ENCODE measurements at regions of chr5 and their contacts with region 1.

Region 1: DNA sequence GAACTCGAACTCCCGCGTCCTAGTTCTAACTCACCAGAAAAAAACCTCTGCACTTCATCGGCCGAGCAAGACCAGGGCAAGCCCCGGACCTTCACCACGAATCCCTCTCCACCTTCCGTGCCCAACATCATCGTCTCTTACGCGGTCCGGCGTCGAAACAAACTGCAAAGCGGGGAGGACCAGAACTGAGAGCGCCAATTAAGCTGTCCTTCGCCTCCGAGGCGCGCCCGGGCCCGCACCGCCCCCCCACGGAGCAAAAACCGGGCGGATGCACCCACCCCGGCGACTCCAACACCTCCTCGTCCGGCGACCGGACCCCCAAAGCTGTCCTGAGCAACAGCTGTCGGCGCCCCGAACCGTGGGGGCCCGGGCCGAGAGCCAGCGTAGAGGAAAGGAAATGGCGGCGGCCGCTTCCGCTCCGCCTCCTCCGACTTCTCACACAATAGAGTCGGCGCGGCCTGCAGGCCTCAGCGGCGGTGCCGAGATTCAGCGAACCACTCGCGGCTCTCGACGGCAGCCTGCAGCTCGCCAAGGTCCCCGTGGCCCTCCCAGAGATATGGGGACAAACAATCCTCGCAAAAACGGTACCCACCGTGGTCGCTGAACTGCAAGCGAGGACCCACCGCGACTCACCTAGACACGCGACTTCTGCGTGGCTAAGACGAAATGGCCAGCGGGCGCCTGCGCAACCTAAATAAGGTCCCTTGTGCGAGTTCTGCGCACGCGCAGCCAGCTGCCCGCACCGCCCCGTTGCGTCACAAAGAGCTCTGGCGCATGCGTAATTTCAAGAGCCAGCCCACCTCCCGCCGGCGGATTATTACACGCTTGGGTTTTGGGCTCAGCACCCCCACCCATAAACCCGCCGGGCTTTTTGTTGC is at the start of gene HNRNPH1:
- DNase-seq: peak; percentile 99
- H3K4me3 Mint-ChIP-seq: peak within 1 kb of the TSS; percentile 99
- H3K27ac Mint-ChIP-seq: peak within 1 kb of the TSS; percentile 99
- H3K4me1 Mint-ChIP-seq: peaks cover 36% of the 10 kb centered on the region
- H3K27me3 Mint-ChIP-seq: no peaks in the 10 kb centered on the region
- total RNA-seq, gene HNRNPH1: 708 to 713 TPM

Region 2: DNA sequence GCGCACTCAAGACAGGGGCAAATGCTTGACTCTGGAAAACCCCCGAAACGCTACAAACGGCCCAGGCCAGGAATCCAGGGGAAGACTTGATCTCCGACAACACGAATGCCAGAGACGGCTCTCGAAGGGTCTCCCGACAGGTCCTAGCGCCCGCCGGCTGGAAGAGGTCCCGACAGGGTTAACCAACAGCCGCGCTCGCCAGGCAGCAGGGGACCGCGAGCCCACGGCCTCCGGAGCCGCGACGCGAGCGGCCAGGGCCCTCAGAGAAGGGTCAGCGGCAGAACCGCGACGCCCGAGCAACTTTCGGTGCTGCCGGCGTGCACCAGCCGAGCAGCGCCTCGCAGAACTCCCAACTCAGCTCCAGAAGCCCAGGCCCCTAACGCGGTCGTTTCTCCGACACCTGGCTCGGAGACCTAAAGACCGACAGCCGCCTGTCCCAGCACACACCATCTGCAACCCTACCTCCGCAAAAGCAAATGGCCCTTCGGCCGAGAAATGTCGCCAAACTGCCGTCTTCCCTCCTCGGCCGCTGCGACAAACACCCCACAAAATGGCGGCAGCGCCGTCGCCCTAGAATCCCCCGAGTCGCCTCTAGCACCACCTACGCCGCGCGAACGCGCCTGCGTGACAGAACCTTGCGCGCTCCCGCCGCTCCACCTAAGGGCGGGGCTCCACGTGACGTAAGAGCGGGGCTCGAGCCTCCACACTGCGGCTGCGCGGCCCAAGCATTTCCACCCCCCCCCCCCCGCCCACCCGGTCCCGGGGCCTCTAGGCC is 996.6 kb before region 1 on chr5 and contains the start of gene CLK4:
- CTCF ChIA-PET with region 1: no interaction called
- intact Hi-C with region 1: loop called (anchors 2 kb)
- DNase-seq: peak; percentile 97
- H3K4me3 Mint-ChIP-seq: peak within 1 kb of the TSS; percentile 97
- H3K27ac Mint-ChIP-seq: peak within 1 kb of the TSS; percentile 95
- H3K4me1 Mint-ChIP-seq: peaks cover 28% of the 10 kb centered on the region
- H3K27me3 Mint-ChIP-seq: no peaks in the 10 kb centered on the region
- total RNA-seq, gene CLK4: 33.9 to 34.9 TPM

Region 3: GRCh38 chr5:179142434-179143198 is 480.6 kb before region 1 on chr5:
- CTCF ChIA-PET with region 1: no interaction called
- intact Hi-C with region 1: loop called (anchors 2 kb)
- DNase-seq: peak; percentile 75
- H3K4me3 Mint-ChIP-seq: no peak overlapping the region
- H3K27ac Mint-ChIP-seq: peak overlapping the region; percentile 79
- H3K4me1 Mint-ChIP-seq: peaks cover 48% of the 10 kb centered on the region
- H3K27me3 Mint-ChIP-seq: no peaks in the 10 kb centered on the region

Region 4: GRCh38 chr5:179550511-179551230 is 72.6 kb before region 1 on chr5 and contains the start of gene RUFY1:
- CTCF ChIA-PET with region 1: no interaction called
- intact Hi-C with region 1: loop called (anchors 1 kb)
- DNase-seq: peak; percentile 77
- H3K4me3 Mint-ChIP-seq: peak within 1 kb of the TSS; percentile 97
- H3K27ac Mint-ChIP-seq: peak within 1 kb of the TSS; percentile 98
- H3K4me1 Mint-ChIP-seq: peaks cover 33% of the 10 kb centered on the region
- H3K27me3 Mint-ChIP-seq: no peaks in the 10 kb centered on the region
- total RNA-seq, gene RUFY1: 27.8 to 31.0 TPM

Region 5: DNA sequence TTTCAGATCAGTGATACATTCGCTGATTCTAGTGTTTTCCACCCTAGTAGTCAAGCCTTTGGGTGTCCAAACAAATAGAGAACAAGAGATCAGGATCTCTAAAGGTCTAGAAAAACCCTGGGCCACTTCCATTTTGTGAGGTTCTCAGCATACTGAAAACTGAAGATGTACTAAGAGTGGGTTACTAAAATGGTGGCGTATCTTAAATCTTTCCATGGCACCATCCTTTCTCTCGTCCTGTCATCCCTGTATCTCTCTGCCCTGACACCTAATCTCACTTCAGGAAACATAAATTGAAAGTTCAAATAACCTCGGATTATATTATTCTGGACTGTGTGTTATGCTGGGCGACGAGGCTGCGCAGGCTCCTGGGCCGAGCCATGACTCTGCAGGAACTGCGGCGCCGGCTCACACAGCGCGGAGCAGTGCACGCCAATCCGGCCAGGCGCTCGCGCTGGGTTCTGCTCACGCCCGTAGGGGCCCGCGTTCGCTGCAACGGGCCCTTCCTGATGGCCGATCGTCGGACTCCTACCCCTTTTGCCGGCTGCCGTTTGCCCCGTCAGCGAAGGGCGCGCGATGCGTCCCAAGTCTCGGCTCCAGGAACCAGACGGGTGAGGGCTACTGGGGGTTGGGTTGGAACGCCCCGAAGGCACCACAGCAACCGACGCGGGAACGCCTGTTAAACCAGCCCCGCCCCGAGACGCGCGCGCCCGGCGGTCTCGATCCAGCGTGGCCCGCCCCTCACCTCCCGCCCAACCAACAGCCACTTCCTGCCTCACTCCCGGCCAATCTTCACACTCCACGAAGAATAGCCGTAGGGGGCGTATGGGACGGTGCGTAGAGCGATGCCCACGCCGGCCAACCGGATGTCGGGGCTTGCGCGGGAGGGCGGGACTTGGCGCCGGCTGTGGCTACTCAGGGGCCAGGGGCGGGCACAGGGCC is 75.0 kb after region 1 on chr5:
- CTCF ChIA-PET with region 1: interaction called, 3 read pairs
- intact Hi-C with region 1: loop called (anchors 1 kb)
- DNase-seq: peak; percentile 99
- H3K4me3 Mint-ChIP-seq: peak overlapping the region; percentile 95
- H3K27ac Mint-ChIP-seq: peak overlapping the region; percentile 97
- H3K4me1 Mint-ChIP-seq: peaks cover 37% of the 10 kb centered on the region
- H3K27me3 Mint-ChIP-seq: no peaks in the 10 kb centered on the region

Region 6: DNA sequence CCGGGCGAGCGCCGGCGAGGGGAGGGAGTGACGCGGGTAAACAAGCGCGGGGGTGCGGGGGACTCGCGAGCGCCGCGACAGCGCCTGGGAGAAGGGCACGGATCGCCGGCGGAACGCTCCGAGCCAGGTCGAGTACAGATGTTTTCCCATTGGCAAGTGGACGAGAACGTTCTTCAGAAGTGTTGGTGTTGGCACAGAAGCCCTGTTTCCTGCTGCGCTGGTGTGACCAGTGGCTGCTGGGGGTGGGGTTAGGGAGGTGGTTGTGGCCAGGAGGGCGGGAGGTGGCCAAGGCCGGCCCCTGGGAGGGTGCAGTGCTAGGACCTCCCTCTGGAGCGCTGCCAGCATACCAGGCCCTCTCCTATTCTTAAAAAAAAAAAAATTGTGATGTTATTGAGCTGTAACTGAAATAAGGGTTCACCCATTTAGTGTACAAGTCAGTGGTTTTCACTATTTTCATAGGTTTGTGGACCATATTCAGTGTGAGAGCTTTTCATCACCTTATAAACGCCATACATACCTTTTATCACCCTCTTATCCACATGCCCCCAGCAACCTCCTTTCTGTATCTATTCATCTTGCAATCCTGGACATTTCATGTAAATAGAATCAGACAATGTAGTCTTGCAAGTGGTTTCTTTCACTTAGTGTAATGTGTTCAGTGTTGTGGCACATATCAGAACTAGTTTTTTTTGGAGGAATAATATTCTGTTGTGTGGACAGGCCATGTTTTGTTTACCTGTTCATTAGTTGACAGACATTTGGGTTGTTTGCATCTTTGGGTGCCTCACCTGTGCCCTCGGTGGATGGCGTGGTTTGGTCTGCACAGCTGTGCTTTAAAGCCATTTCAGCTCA is 198.6 kb after region 1 on chr5:
- CTCF ChIA-PET with region 1: no interaction called
- intact Hi-C with region 1: loop called (anchors 1 kb)
- DNase-seq: peak; percentile 92
- H3K4me3 Mint-ChIP-seq: peak overlapping the region; percentile 88
- H3K27ac Mint-ChIP-seq: peak overlapping the region; percentile 92
- H3K4me1 Mint-ChIP-seq: peaks cover 49% of the 10 kb centered on the region
- H3K27me3 Mint-ChIP-seq: peaks cover 4% of the 10 kb centered on the region

Region 7: DNA sequence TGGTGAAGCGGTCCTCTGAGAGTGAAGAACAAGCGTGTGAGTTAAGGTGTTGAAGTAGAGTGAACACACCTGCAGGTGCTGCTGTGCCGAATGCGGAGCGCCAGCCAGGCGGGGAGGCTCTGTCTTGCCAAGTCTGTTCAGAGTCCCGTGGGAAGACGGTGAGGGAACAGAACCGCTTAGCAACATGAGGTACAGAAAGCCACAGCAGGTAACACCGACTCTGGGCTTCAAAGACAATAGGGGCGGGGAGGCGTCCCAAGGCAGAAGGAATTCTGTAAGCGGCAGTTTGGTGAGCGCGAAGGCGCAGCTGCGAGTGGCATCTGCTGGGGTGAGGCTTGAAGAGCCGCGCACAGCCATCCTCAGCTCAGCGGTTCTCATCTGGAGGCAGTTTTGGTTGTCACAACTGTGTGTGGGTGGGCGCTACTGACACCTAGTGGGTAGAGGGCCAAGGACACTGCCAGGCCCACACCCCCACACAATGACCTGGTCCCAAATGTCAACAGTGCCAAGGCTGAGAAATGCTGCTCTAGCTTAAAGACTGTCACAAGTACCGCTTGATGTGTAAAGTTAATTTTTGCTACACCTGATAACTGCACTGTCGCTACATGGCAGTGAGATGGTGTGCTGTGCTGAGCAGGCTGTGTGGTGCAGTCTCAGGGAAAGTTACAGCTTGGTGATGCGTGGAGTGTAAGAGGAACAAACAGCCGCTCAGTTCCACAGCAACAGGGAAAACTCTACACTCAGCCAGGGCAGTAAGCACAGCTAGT is 351.9 kb after region 1 on chr5:
- CTCF ChIA-PET with region 1: no interaction called
- intact Hi-C with region 1: no loop called
- DNase-seq: peak; percentile 44
- H3K4me3 Mint-ChIP-seq: no peak overlapping the region
- H3K27ac Mint-ChIP-seq: no peak overlapping the region
- H3K4me1 Mint-ChIP-seq: peaks cover 5% of the 10 kb centered on the region
- H3K27me3 Mint-ChIP-seq: no peaks in the 10 kb centered on the region

Region 8: GRCh38 chr5:181181650-181182565 is 1558.7 kb after region 1 on chr5:
- CTCF ChIA-PET with region 1: no interaction called
- intact Hi-C with region 1: loop called (anchors 10 kb)
- DNase-seq: peak; percentile 82
- H3K4me3 Mint-ChIP-seq: peak overlapping the region; percentile 20
- H3K27ac Mint-ChIP-seq: no peak overlapping the region
- H3K4me1 Mint-ChIP-seq: peaks cover 19% of the 10 kb centered on the region
- H3K27me3 Mint-ChIP-seq: peaks cover 4% of the 10 kb centered on the region